A549 (cell line): ENCODE measurements at regions of chr17 and their contacts with region 1.

Region 1: GRCh38 chr17:1186923-1187771 is 7.4 kb upstream of the ABR start:
- DNase-seq: peak; percentile 92 to 95
- ATAC-seq: peak; percentile 90 to 98
- H3K4me3 ChIP-seq: no peak overlapping the region
- H3K27ac ChIP-seq: peak overlapping the region in 1 of 2 experiments; percentile 61; a peak in 3 of 6 replicates
- H3K4me1 ChIP-seq: peaks cover 4% of the 10 kb centered on the region; the same call in 1 of the 3 replicates
- CTCF ChIP-seq: peak; percentile 97
- EP300 ChIP-seq: no peak
- POLR2A ChIP-seq: no peak
- RAD21 ChIP-seq: peak; percentile 79 to 85

Region 2: GRCh38 chr17:1116602-1117001 is 70.5 kb before region 1 on chr17:
- CTCF ChIA-PET with region 1: interaction called, 324 read pairs
- POLR2A ChIA-PET with region 1: no interaction called
- DNase-seq: no peak
- ATAC-seq: no peak
- H3K4me3 ChIP-seq: no peak overlapping the region
- H3K27ac ChIP-seq: peak overlapping the region; percentile 27 to 99; a peak in 4 of 6 replicates
- H3K4me1 ChIP-seq: peaks cover 34% of the 10 kb centered on the region
- CTCF ChIP-seq: no peak
- EP300 ChIP-seq: no peak
- POLR2A ChIP-seq: no peak
- RAD21 ChIP-seq: no peak

Region 3: DNA sequence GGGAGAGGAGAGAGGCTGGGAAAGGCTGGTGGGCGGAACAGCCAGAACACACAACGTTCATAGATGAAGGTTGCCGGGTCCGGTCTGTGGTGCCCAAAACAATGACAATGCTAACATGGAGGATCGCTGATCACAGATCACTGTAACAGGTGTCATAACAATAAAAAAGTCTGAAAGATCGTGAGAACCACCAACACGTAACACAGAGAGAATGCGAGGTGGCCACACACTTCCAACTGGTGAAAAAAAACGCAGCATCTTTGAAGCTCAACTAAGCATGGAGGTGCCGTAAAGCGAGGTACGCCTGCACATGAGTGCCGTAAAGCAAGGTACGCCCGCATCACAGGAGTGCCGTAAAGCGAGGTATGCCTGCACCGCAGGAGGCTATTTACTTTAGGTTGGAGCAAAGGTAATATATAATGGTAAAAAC is 49.7 kb before region 1 on chr17:
- CTCF ChIA-PET with region 1: interaction called, 149 read pairs
- POLR2A ChIA-PET with region 1: interaction called, 3 read pairs
- DNase-seq: peak; percentile 79 to 94
- ATAC-seq: peak; percentile 63 to 69; a peak in 5 of 6 replicates
- H3K4me3 ChIP-seq: peak overlapping the region; percentile 42
- H3K27ac ChIP-seq: peak overlapping the region; percentile 67 to 83
- H3K4me1 ChIP-seq: no peaks in the 10 kb centered on the region
- CTCF ChIP-seq: no peak
- EP300 ChIP-seq: no peak
- POLR2A ChIP-seq: peak; percentile 58
- RAD21 ChIP-seq: no peak

Region 4: GRCh38 chr17:1164935-1165556 is 22.1 kb before region 1 on chr17:
- CTCF ChIA-PET with region 1: interaction called, 60 read pairs
- POLR2A ChIA-PET with region 1: no interaction called
- DNase-seq: no peak
- ATAC-seq: peak; percentile 16 to 48; a peak in 3 of 6 replicates
- H3K4me3 ChIP-seq: no peak overlapping the region
- H3K27ac ChIP-seq: no peak overlapping the region
- H3K4me1 ChIP-seq: no peaks in the 10 kb centered on the region
- CTCF ChIP-seq: no peak
- EP300 ChIP-seq: no peak
- POLR2A ChIP-seq: no peak
- RAD21 ChIP-seq: no peak

Region 5: GRCh38 chr17:1197781-1198490 is 10.8 kb after region 1 on chr17:
- CTCF ChIA-PET with region 1: interaction called, 120 read pairs
- POLR2A ChIA-PET with region 1: no interaction called
- DNase-seq: no peak
- ATAC-seq: peak; percentile 10 to 23; a peak in 3 of 6 replicates
- H3K4me3 ChIP-seq: no peak overlapping the region
- H3K27ac ChIP-seq: peak overlapping the region in 1 of 2 experiments; percentile 22; a peak in 1 of 6 replicates
- H3K4me1 ChIP-seq: no peaks in the 10 kb centered on the region
- CTCF ChIP-seq: no peak
- EP300 ChIP-seq: no peak
- POLR2A ChIP-seq: no peak
- RAD21 ChIP-seq: no peak

Region 6: GRCh38 chr17:1216217-1217088 is 29.3 kb after region 1 on chr17:
- CTCF ChIA-PET with region 1: interaction called, 38 read pairs
- POLR2A ChIA-PET with region 1: no interaction called
- DNase-seq: no peak
- ATAC-seq: peak in 1 of 2 experiments; percentile 27; a peak in 1 of 6 replicates
- H3K4me3 ChIP-seq: no peak overlapping the region
- H3K27ac ChIP-seq: no peak overlapping the region
- H3K4me1 ChIP-seq: peaks cover 14% of the 10 kb centered on the region
- CTCF ChIP-seq: no peak
- EP300 ChIP-seq: no peak
- POLR2A ChIP-seq: no peak
- RAD21 ChIP-seq: no peak

Region 7: GRCh38 chr17:1298606-1299005 is 111.5 kb after region 1 on chr17:
- CTCF ChIA-PET with region 1: no interaction called
- POLR2A ChIA-PET with region 1: no interaction called
- DNase-seq: no peak
- ATAC-seq: peak; percentile 5 to 37; a peak in 3 of 6 replicates
- H3K4me3 ChIP-seq: no peak overlapping the region
- H3K27ac ChIP-seq: no peak overlapping the region
- H3K4me1 ChIP-seq: no peaks in the 10 kb centered on the region
- CTCF ChIP-seq: no peak
- EP300 ChIP-seq: no peak
- POLR2A ChIP-seq: no peak
- RAD21 ChIP-seq: no peak